ENCODE measurements at regions of chr2 and their contacts with region 1.

Region 1: GRCh38 chr2:42810121-42810970 is 18.0 kb upstream of the HAAO start:
- DNase-seq: peak; percentile 96
- H3K4me3 Mint-ChIP-seq: peak overlapping the region; percentile 88
- H3K27ac Mint-ChIP-seq: peak overlapping the region; percentile 93
- H3K4me1 Mint-ChIP-seq: peaks cover 11% of the 10 kb centered on the region
- H3K27me3 Mint-ChIP-seq: no peaks in the 10 kb centered on the region

Region 2: DNA sequence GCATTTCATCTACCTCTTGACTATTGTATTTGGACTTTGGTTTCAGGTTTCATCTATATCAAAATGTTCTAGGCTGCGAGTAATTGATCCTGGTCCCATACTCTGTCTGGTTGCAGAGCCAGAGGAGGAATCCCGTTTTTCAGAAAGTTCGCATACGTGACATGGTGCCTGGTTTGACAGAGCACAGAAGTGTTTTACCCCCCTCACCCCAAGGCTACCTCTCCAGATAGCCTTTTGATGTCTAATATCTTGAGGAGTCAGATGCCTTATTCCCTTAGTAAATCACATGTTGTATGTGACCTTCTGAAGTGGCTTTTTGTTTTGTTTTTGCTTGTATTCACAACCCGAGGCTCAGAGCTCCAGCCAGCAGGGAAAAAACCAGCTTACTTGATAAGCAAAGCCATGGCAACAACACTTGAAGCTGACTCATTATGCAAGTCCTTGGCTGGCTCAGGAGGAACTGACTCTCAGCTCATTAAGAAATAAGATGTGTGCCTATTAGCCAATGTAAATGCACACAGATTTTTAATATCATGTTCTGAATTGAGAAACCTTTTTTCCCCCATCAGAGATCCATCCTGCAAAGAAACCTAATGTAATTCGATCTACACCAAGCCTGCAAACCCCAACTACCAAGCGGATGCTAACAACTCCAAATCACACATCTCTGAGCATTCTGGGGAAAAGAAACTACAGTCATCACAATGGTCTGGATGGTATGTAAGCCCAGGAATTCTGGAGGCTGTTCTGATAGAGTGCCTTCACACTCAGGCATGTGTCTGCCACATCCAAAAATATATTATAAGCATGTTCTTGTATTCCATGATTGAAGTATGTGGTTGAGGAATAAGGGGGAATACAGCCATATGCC is 87.8 kb before region 1 on chr2:
- CTCF ChIA-PET with region 1: no interaction called
- intact Hi-C with region 1: loop called (anchors 2 kb)
- DNase-seq: peak; percentile 77
- H3K4me3 Mint-ChIP-seq: no peak overlapping the region
- H3K27ac Mint-ChIP-seq: peak overlapping the region; percentile 39
- H3K4me1 Mint-ChIP-seq: peaks cover 10% of the 10 kb centered on the region
- H3K27me3 Mint-ChIP-seq: no peaks in the 10 kb centered on the region

Region 3: GRCh38 chr2:42792583-42793333 is 17.6 kb before region 1 on chr2 and contains the start of gene HAAO:
- CTCF ChIA-PET with region 1: interaction called, 4 read pairs
- intact Hi-C with region 1: loop called (anchors 1 kb)
- DNase-seq: no peak
- H3K4me3 Mint-ChIP-seq: peak within 1 kb of the TSS; percentile 81
- H3K27ac Mint-ChIP-seq: no peak within 1 kb of the TSS
- H3K4me1 Mint-ChIP-seq: peaks cover 27% of the 10 kb centered on the region
- H3K27me3 Mint-ChIP-seq: peaks cover 40% of the 10 kb centered on the region
- total RNA-seq, gene HAAO: 0.41 to 0.52 TPM

Region 4: DNA sequence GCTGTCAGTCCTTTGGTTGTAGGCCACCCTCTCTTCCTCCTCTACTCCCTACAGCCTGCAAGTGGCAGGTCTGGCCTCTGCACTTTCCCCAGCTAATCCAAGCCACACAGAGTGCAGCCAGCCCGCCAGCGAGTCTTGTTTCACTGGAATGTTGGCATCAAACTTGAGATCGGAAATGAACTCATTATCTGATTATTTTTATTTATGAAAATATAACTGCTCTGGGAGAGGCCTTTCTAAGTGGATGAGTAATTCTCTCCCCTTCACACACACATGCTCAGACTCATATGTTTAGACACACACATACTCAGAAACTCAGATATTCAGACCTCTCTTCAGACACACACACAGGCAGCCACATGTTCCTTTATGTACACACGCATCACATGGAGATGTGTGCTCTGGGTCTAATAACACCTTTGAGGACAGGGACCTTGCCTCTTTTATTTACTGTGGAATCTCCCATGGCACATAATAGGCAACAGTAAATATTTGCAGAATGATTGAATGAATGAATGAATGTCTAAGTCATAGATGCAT is 264.8 kb after region 1 on chr2:
- CTCF ChIA-PET with region 1: no interaction called
- intact Hi-C with region 1: no loop called
- DNase-seq: no peak
- H3K4me3 Mint-ChIP-seq: no peak overlapping the region
- H3K27ac Mint-ChIP-seq: no peak overlapping the region
- H3K4me1 Mint-ChIP-seq: peaks cover 4% of the 10 kb centered on the region
- H3K27me3 Mint-ChIP-seq: no peaks in the 10 kb centered on the region

Region 5: DNA sequence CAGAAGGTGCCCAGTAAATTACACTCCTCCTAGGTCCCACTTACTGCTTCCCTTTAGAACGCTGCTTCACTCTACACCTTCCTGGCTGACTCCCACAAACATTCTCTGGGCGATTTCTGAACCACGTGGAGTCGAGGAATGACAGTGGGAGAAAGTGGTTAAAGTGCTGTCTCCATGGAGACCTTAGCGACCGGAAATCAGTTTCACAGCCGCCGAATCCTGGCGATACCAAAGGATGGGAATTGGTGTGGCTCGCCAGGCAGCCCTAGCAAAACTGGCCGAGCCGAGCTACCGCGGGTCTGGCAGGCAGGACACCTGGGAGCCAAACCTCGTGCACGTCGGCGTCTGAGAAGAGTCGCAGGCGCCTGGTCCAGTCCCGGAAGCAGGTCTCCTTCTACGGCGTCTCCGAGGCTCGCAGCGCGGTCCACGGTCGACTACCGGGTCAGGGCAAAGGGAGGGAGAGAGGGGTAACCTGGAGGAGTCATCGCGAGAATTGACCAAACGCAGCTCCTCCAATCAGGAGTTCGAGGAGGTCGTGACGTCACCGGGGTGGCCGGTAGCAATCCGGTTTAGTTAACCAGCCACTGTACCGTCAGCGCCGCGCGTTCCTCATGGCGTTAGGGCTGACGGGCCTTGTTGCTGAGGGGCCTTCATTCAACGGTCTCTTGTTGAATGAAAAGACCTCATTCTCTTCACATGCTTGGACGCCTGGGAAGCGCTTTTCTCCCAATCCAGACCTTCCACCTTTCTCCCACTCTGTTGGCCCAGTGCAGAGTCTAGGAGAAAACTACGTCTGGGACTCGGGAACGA is 785.5 kb after region 1 on chr2 and contains the start of gene THADA:
- CTCF ChIA-PET with region 1: no interaction called
- intact Hi-C with region 1: loop called (anchors 1 kb)
- DNase-seq: peak; percentile 99
- H3K4me3 Mint-ChIP-seq: peak within 1 kb of the TSS; percentile 94
- H3K27ac Mint-ChIP-seq: peak within 1 kb of the TSS; percentile 96
- H3K4me1 Mint-ChIP-seq: peaks cover 31% of the 10 kb centered on the region
- H3K27me3 Mint-ChIP-seq: no peaks in the 10 kb centered on the region
- total RNA-seq, gene THADA: 28.6 to 31.5 TPM

Measured in activated naive CD4-positive, alpha-beta T cell treated with anti-CD3 and anti-CD28 coated beads for 36 hours (primary cell).